B cell (primary cell): ENCODE measurements at regions of chr6 and their contacts with region 1.

Region 1: GRCh38 chr6:69866770-69867638 is 648 bp downstream of the COL19A1 start:
- DNase-seq: peak; percentile 92
- ATAC-seq: peak; percentile 78
- H3K4me3 ChIP-seq: peak overlapping the region; percentile 52 to 88 (median 78)
- H3K4me3 Mint-ChIP-seq: peak overlapping the region; percentile 93
- H3K27ac ChIP-seq: peak overlapping the region; percentile 91 to 96
- H3K27ac Mint-ChIP-seq: peak overlapping the region; percentile 95
- H3K4me1 ChIP-seq: peaks cover 36 to 55% of the 10 kb centered on the region in 2 donors
- H3K4me1 Mint-ChIP-seq: peaks cover 65% of the 10 kb centered on the region
- H3K27me3 ChIP-seq: no peaks in the 10 kb centered on the region
- H3K27me3 Mint-ChIP-seq: no peaks in the 10 kb centered on the region
- CTCF ChIP-seq: peak; percentile 65

Region 2: DNA sequence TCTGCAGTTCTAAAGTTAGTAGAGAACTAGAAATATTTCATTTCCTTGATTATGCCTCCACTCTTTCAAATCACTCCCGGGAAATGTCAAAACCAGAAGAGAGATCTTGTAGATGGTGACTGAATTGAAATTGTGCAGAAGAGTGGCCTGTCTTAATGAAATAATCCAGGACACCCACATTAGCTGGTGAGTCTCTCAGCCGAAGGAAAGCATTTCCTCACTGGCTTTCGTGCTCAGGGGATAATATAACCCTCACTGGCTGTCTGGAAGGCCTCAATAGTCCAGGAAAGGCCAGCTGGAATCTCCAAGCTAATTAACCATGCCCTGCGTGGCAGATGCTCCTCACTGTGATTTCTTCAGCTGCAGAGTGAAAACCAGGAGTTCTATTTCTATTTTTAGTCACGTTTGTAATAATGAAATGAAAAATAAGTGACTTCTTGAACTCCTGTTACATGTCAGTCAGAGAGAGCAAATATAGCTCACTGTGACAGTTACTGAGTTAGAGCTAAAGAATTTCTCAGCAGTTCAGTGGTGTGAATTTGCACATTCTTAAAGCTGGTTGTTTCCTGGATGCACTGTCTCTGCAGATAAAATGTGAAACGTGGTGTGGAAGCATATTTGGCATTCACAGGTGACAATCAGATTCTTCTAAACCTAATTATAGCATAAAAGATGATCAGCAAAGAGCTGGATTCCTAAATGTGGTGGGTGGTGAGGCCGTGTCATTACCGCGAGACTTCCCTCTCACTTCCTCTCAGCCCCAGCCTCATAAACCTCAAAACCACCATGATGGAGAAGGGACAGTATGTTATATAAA is 281.9 kb before region 1 on chr6:
- CTCF ChIA-PET with region 1: no interaction called
- POLR2A ChIA-PET with region 1: no interaction called
- intact Hi-C with region 1: no loop called
- DNase-seq: no peak
- ATAC-seq: no peak
- H3K4me3 ChIP-seq: no peak overlapping the region
- H3K4me3 Mint-ChIP-seq: no peak overlapping the region
- H3K27ac ChIP-seq: no peak overlapping the region
- H3K27ac Mint-ChIP-seq: no peak overlapping the region
- H3K4me1 ChIP-seq: peaks cover 4 to 6% of the 10 kb centered on the region in 2 donors
- H3K4me1 Mint-ChIP-seq: peaks cover 11% of the 10 kb centered on the region
- H3K27me3 ChIP-seq: no peaks in the 10 kb centered on the region
- H3K27me3 Mint-ChIP-seq: peaks cover 4% of the 10 kb centered on the region
- CTCF ChIP-seq: no peak

Region 3: DNA sequence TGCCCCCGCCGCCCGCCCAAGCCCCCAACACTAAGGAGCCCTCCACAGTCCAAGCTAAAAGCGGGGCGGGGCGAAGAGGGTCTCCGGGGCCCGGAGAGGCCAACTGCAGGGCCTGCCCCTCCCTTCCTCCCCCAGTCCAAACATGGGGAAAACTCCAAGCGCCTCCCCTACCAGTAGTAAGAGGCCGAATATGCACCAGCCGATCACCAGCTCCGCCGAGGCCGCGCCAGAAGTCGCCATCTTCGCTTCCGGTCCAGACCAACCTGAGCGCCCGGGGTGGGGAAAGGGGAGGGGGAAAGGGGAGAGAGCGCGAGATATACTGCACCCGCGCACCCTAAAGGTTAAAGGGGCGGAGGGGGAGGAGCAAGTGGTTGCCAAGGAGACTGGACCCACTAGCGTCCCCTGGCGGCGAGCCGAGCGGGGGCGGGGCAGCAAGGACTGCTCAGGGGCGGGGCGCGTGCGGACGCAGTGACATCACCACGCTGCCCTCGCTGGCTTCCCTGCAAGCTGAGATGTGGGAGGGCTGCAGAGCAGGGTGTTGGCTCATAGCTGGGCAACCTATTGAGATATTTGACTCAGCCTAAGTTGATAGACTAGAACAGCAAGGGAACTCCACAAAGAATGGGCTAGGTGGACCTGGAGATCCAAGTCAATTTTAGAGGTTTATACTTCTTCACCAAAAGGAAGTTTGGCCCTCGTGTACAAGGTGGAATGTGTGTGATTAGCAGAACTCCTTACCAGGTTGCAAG is 70.2 kb before region 1 on chr6 and contains the start of gene LMBRD1:
- CTCF ChIA-PET with region 1: interaction called, 21 read pairs
- POLR2A ChIA-PET with region 1: interaction called, 38 read pairs
- intact Hi-C with region 1: loop called (anchors 1 kb)
- DNase-seq: peak; percentile 99
- ATAC-seq: peak; percentile 84
- H3K4me3 ChIP-seq: peak within 1 kb of the TSS; percentile 81 to 97 (median 85)
- H3K4me3 Mint-ChIP-seq: peak within 1 kb of the TSS; percentile 93
- H3K27ac ChIP-seq: peak within 1 kb of the TSS; percentile 90 to 99
- H3K27ac Mint-ChIP-seq: peak within 1 kb of the TSS; percentile 96
- H3K4me1 ChIP-seq: peaks cover 39 to 40% of the 10 kb centered on the region in 2 donors
- H3K4me1 Mint-ChIP-seq: peaks cover 46% of the 10 kb centered on the region
- H3K27me3 ChIP-seq: no peaks in the 10 kb centered on the region
- H3K27me3 Mint-ChIP-seq: no peaks in the 10 kb centered on the region
- CTCF ChIP-seq: peak; percentile 95
- total RNA-seq, gene LMBRD1: 94.0 and 99.0 TPM in 2 replicates

Region 4: DNA sequence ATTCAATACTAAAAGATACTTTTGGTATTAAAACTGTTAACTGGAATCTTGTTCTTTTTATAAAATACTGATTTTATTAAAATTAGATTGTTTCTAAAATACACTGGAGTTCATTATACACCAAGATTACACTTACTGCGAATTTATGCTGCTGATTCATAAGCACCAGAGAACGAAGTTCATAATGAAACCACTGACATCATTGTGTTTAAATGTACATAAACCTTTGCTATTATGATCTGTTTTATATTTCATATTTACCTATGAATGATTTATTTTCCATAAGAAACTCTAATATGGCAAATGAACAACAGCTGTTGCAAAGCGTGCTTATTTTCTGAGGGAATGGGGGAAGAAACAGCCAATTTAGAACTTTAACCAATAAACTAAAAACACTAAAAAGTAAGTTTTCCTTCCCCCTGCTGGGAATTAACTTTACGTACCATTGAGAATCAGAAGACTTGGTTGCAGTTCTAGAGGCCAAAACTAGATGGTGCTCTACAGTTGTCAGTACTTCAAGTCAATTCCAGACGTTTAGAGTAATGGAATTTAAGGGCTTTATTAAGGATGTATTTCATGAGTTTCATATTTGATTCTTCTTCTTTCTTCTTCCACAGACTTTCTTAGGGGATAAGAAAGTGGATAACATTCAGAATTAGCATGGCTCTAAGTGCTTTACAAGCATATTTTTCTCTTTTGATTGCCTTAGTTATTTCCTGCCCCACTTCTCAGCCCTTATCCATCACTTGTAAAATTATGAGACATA is 31.4 kb before region 1 on chr6:
- CTCF ChIA-PET with region 1: interaction called, 29 read pairs
- POLR2A ChIA-PET with region 1: no interaction called
- intact Hi-C with region 1: no loop called
- DNase-seq: peak; percentile 74
- ATAC-seq: peak; percentile 70
- H3K4me3 ChIP-seq: no peak overlapping the region
- H3K4me3 Mint-ChIP-seq: peak overlapping the region; percentile 40
- H3K27ac ChIP-seq: peak overlapping the region in 1 of 2 donors; percentile 53
- H3K27ac Mint-ChIP-seq: peak overlapping the region; percentile 12
- H3K4me1 ChIP-seq: peaks cover 15 to 21% of the 10 kb centered on the region in 2 donors
- H3K4me1 Mint-ChIP-seq: peaks cover 21% of the 10 kb centered on the region
- H3K27me3 ChIP-seq: no peaks in the 10 kb centered on the region
- H3K27me3 Mint-ChIP-seq: no peaks in the 10 kb centered on the region
- CTCF ChIP-seq: peak; percentile 96

Region 5: GRCh38 chr6:69887026-69887425 is 20.0 kb after region 1 on chr6:
- CTCF ChIA-PET with region 1: interaction called, 66 read pairs
- POLR2A ChIA-PET with region 1: interaction called, 38 read pairs
- intact Hi-C with region 1: no loop called
- DNase-seq: peak; percentile 77
- ATAC-seq: peak; percentile 73
- H3K4me3 ChIP-seq: no peak overlapping the region
- H3K4me3 Mint-ChIP-seq: peak overlapping the region; percentile 58
- H3K27ac ChIP-seq: peak overlapping the region; percentile 90 to 100
- H3K27ac Mint-ChIP-seq: peak overlapping the region; percentile 87
- H3K4me1 ChIP-seq: peaks cover 59 to 72% of the 10 kb centered on the region in 2 donors
- H3K4me1 Mint-ChIP-seq: peaks cover 59% of the 10 kb centered on the region
- H3K27me3 ChIP-seq: no peaks in the 10 kb centered on the region
- H3K27me3 Mint-ChIP-seq: no peaks in the 10 kb centered on the region
- CTCF ChIP-seq: no peak

Region 6: GRCh38 chr6:69913361-69913760 is 46.4 kb after region 1 on chr6:
- CTCF ChIA-PET with region 1: interaction called, 4 read pairs
- POLR2A ChIA-PET with region 1: no interaction called
- intact Hi-C with region 1: loop called (anchors 2 kb)
- DNase-seq: no peak
- ATAC-seq: peak; percentile 36
- H3K4me3 ChIP-seq: no peak overlapping the region
- H3K4me3 Mint-ChIP-seq: no peak overlapping the region
- H3K27ac ChIP-seq: peak overlapping the region in 1 of 2 donors; percentile 69
- H3K27ac Mint-ChIP-seq: peak overlapping the region; percentile 72
- H3K4me1 ChIP-seq: peaks cover 26 to 43% of the 10 kb centered on the region in 2 donors
- H3K4me1 Mint-ChIP-seq: peaks cover 50% of the 10 kb centered on the region
- H3K27me3 ChIP-seq: no peaks in the 10 kb centered on the region
- H3K27me3 Mint-ChIP-seq: no peaks in the 10 kb centered on the region
- CTCF ChIP-seq: no peak

Region 7: GRCh38 chr6:69985180-69985579 is 118.2 kb after region 1 on chr6:
- CTCF ChIA-PET with region 1: interaction called, 6 read pairs
- POLR2A ChIA-PET with region 1: no interaction called
- intact Hi-C with region 1: loop called (anchors 5 kb)
- DNase-seq: no peak
- ATAC-seq: peak; percentile 21
- H3K4me3 ChIP-seq: no peak overlapping the region
- H3K4me3 Mint-ChIP-seq: no peak overlapping the region
- H3K27ac ChIP-seq: peak overlapping the region in 1 of 2 donors; percentile 58
- H3K27ac Mint-ChIP-seq: peak overlapping the region; percentile 32
- H3K4me1 ChIP-seq: peaks cover 8 to 25% of the 10 kb centered on the region in 2 donors
- H3K4me1 Mint-ChIP-seq: peaks cover 38% of the 10 kb centered on the region
- H3K27me3 ChIP-seq: no peaks in the 10 kb centered on the region
- H3K27me3 Mint-ChIP-seq: no peaks in the 10 kb centered on the region
- CTCF ChIP-seq: no peak

Region 8: GRCh38 chr6:69995870-69996269 is 128.9 kb after region 1 on chr6:
- CTCF ChIA-PET with region 1: no interaction called
- POLR2A ChIA-PET with region 1: no interaction called
- intact Hi-C with region 1: no loop called
- DNase-seq: no peak
- ATAC-seq: no peak
- H3K4me3 ChIP-seq: no peak overlapping the region
- H3K4me3 Mint-ChIP-seq: no peak overlapping the region
- H3K27ac ChIP-seq: no peak overlapping the region
- H3K27ac Mint-ChIP-seq: no peak overlapping the region
- H3K4me1 ChIP-seq: no peaks in the 10 kb centered on the region
- H3K4me1 Mint-ChIP-seq: peaks cover 10% of the 10 kb centered on the region
- H3K27me3 ChIP-seq: no peaks in the 10 kb centered on the region
- H3K27me3 Mint-ChIP-seq: no peaks in the 10 kb centered on the region
- CTCF ChIP-seq: no peak